Caco-2 (cell line): ENCODE measurements at regions of chr10 and their contacts with region 1.

Region 1: DNA sequence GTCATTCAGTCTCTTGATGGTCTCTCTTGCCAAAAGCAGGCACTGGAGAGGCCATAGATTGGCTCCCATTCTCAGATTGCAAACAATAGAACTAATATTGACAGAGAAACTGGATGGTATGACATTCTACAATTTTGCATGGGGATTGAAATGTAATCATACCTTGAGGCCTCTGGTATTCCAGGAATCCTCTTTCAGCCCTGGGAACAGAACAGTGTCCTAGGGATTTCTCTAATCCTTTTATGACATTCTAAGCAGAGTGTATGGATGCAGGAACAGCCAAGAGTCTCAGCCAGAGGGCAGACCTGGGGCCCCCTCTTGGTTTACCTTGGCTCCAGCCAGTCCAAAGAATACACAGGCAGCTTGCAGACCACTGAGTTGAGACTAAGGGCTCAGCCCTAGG is 206.4 kb downstream of the KCNMA1 start:
- DNase-seq: peak; percentile 90 to 94
- H3K4me3 ChIP-seq: no peak overlapping the region
- H3K4me3 Mint-ChIP-seq: peak overlapping the region; percentile 47
- H3K27ac Mint-ChIP-seq: peak overlapping the region; percentile 92
- H3K4me1 ChIP-seq: peaks cover 62% of the 10 kb centered on the region
- H3K4me1 Mint-ChIP-seq: peaks cover 66% of the 10 kb centered on the region
- H3K27me3 ChIP-seq: no peaks in the 10 kb centered on the region
- H3K27me3 Mint-ChIP-seq: no peaks in the 10 kb centered on the region
- CTCF ChIP-seq: peak in 1 of 2 experiments; percentile 75

Region 2: GRCh38 chr10:77391605-77392235 is 39.5 kb before region 1 on chr10:
- CTCF ChIA-PET with region 1: interaction called, 4 read pairs
- POLR2A ChIA-PET with region 1: no interaction called
- intact Hi-C with region 1: loop called (anchors 1 kb)
- DNase-seq: peak; percentile 79 to 81
- H3K4me3 ChIP-seq: no peak overlapping the region
- H3K4me3 Mint-ChIP-seq: no peak overlapping the region
- H3K27ac Mint-ChIP-seq: no peak overlapping the region
- H3K4me1 ChIP-seq: peaks cover 50% of the 10 kb centered on the region
- H3K4me1 Mint-ChIP-seq: peaks cover 40% of the 10 kb centered on the region
- H3K27me3 ChIP-seq: no peaks in the 10 kb centered on the region
- H3K27me3 Mint-ChIP-seq: no peaks in the 10 kb centered on the region
- CTCF ChIP-seq: peak; percentile 42 to 65

Region 3: DNA sequence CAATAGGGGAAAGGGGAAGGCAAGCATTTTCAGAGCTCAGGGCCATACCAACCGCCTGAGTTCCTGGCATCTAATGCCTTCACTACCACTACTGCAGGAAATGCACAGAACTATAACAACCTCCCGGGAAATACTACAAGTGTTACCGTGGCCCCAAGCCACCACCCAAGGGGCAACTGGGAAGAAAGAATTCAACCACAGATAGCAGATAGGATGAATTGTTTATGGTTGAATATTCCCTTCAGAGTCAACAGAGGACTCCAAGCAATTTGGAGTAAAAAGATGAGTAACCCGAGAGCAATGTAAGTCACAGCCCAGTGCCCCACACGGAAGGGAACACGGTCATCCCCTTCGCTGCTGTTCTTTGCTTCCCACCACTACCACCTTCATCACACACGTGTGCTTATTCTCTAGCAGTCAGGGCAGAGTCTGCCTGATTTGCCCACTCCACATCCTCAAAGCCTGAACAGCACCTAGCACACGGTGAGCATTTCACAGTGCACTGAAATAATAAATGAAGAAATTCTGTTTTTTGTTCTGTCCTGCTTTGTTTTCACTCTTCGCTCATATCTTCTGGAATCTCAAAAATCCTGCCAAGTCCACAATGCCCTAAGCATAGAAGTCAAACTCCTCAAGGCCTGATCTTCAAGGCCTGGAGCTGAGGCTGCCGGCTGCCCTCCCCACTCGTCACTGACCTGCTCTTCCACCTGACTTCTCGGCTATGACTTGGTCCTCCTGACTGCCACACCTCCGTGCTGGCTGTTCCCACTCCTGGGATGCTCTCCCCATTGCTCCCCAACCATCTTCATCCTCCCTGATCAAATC is 14.7 kb before region 1 on chr10:
- CTCF ChIA-PET with region 1: interaction called, 3 read pairs
- POLR2A ChIA-PET with region 1: no interaction called
- intact Hi-C with region 1: loop called (anchors 2 kb)
- DNase-seq: peak; percentile 25 to 46
- H3K4me3 ChIP-seq: no peak overlapping the region
- H3K4me3 Mint-ChIP-seq: peak overlapping the region; percentile 23
- H3K27ac Mint-ChIP-seq: peak overlapping the region; percentile 68
- H3K4me1 ChIP-seq: peaks cover 54% of the 10 kb centered on the region
- H3K4me1 Mint-ChIP-seq: peaks cover 36% of the 10 kb centered on the region
- H3K27me3 ChIP-seq: no peaks in the 10 kb centered on the region
- H3K27me3 Mint-ChIP-seq: no peaks in the 10 kb centered on the region
- CTCF ChIP-seq: no peak

Region 4: DNA sequence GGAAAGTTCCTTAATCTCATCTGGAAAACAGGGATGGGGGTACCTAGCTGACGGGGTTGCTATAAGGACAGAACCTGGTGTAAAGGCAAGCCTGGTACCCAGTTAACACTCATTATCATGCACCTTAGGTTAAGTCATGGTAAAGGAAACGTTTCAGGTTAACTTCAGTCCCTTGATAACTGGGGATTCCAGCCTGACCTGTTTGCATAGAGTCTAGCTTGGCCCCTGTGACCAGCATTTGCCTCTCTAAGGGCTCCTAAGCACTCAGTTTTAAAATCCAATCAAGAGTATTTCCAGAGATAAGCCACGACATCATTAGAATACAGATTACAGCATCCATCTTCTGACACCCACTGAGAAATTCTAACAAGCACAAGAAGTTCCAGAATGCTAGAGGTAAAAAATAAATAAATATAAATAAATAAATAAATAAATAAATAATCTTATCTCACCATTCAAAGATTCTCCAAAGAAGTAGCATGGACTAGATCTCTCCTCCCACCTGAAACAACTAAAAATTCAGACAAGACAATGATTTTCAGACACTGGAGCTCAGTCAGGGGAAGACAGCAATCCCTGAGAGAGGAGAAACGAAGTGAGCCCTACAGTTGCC is 21.8 kb after region 1 on chr10:
- CTCF ChIA-PET with region 1: interaction called, 3 read pairs
- POLR2A ChIA-PET with region 1: no interaction called
- intact Hi-C with region 1: loop called (anchors 1 kb)
- DNase-seq: peak; percentile 51 to 58
- H3K4me3 ChIP-seq: no peak overlapping the region
- H3K4me3 Mint-ChIP-seq: no peak overlapping the region
- H3K27ac Mint-ChIP-seq: peak overlapping the region; percentile 59
- H3K4me1 ChIP-seq: peaks cover 37% of the 10 kb centered on the region
- H3K4me1 Mint-ChIP-seq: peaks cover 49% of the 10 kb centered on the region
- H3K27me3 ChIP-seq: no peaks in the 10 kb centered on the region
- H3K27me3 Mint-ChIP-seq: no peaks in the 10 kb centered on the region
- CTCF ChIP-seq: no peak

Region 5: DNA sequence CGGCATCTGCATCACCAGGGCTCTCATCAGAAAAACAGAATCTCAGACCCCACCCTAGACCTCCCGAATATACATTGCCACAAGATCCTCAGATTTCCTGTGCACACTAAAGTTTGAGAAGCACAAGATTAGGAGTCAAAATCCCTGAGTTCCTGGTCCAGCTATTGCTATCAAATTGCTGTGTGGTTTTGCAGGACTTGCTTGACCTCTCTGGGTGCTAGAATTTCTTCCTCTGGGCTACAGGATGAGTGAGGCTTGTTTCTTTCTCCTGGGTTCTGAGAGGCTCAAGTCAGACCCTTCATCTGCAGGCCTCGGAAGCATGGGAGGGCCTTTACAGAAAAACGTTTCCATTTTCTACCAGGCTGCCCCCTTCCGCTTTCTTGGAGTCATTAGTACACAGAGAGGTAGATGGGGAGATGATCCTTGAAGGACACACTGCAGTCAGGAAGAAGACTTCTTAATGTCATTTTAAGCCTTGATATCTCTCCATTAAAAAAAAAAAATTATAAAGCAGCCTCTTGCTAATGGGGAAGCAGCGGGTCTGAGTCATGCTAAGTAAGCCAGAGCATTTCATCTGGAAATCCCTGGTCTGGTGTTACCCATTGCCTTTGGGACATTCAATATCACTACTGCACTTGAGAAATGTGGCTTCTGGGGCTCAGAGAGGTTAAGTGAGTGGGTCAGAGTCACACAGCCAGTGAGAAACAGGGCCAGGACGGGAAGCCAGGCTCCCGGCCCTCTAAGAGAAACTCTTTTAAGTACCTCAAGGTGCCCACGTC is 32.9 kb after region 1 on chr10:
- CTCF ChIA-PET with region 1: no interaction called
- POLR2A ChIA-PET with region 1: no interaction called
- intact Hi-C with region 1: no loop called
- DNase-seq: no peak
- H3K4me3 ChIP-seq: no peak overlapping the region
- H3K4me3 Mint-ChIP-seq: no peak overlapping the region
- H3K27ac Mint-ChIP-seq: no peak overlapping the region
- H3K4me1 ChIP-seq: peaks cover 6% of the 10 kb centered on the region
- H3K4me1 Mint-ChIP-seq: peaks cover 25% of the 10 kb centered on the region
- H3K27me3 ChIP-seq: no peaks in the 10 kb centered on the region
- H3K27me3 Mint-ChIP-seq: no peaks in the 10 kb centered on the region
- CTCF ChIP-seq: no peak

Region 6: GRCh38 chr10:77478247-77478961 is 47.2 kb after region 1 on chr10:
- CTCF ChIA-PET with region 1: no interaction called
- POLR2A ChIA-PET with region 1: no interaction called
- intact Hi-C with region 1: no loop called
- DNase-seq: no peak
- H3K4me3 ChIP-seq: no peak overlapping the region
- H3K4me3 Mint-ChIP-seq: no peak overlapping the region
- H3K27ac Mint-ChIP-seq: no peak overlapping the region
- H3K4me1 ChIP-seq: peaks cover 8% of the 10 kb centered on the region; the same call in 1 of the 2 replicates
- H3K4me1 Mint-ChIP-seq: peaks cover 14% of the 10 kb centered on the region
- H3K27me3 ChIP-seq: no peaks in the 10 kb centered on the region
- H3K27me3 Mint-ChIP-seq: no peaks in the 10 kb centered on the region
- CTCF ChIP-seq: no peak

Region 7: DNA sequence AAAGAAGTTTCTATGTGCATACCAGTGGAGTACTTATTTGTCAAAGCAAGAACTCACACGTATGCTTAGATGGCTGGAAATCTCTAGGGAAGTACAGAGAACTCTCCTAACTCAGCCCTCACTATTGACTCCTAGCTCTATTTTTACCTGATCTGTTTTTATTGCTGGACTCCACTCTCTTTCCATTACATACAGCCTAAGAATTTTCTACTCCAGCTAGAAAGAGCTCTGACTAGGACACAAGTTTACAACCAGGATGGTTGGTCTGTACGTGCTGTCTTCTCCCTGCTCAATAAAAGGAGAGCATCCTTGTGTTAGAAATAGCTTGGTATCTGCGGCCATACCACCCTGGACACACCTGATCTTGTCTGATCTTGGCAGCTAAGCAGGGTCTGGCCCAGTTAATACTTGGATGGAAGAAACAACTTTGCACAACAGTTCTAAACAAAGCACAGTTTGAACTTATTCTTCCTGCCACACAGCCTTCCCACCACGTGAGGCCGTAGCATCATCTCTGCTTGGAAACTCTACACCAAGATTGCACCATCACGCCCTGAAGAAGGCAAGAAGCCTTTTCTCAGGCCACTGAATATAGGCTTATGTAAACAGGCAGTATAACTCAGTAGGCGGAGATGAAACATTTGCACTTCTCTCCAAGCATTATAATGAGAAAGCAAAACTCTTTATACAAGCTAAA is 155.7 kb after region 1 on chr10:
- CTCF ChIA-PET with region 1: no interaction called
- POLR2A ChIA-PET with region 1: no interaction called
- intact Hi-C with region 1: loop called (anchors 1 kb)
- DNase-seq: peak in 1 of 2 experiments; percentile 58
- H3K4me3 ChIP-seq: no peak overlapping the region
- H3K4me3 Mint-ChIP-seq: no peak overlapping the region
- H3K27ac Mint-ChIP-seq: peak overlapping the region; percentile 73
- H3K4me1 ChIP-seq: peaks cover 22% of the 10 kb centered on the region; the same call in 1 of the 2 replicates
- H3K4me1 Mint-ChIP-seq: peaks cover 10% of the 10 kb centered on the region
- H3K27me3 ChIP-seq: no peaks in the 10 kb centered on the region
- H3K27me3 Mint-ChIP-seq: no peaks in the 10 kb centered on the region
- CTCF ChIP-seq: peak in 1 of 2 experiments; percentile 17

Region 8: GRCh38 chr10:77628906-77629730 is 197.9 kb after region 1 on chr10:
- CTCF ChIA-PET with region 1: no interaction called
- POLR2A ChIA-PET with region 1: no interaction called
- intact Hi-C with region 1: no loop called
- DNase-seq: no peak
- H3K4me3 ChIP-seq: no peak overlapping the region
- H3K4me3 Mint-ChIP-seq: no peak overlapping the region
- H3K27ac Mint-ChIP-seq: no peak overlapping the region
- H3K4me1 ChIP-seq: no peaks in the 10 kb centered on the region
- H3K4me1 Mint-ChIP-seq: peaks cover 10% of the 10 kb centered on the region
- H3K27me3 ChIP-seq: no peaks in the 10 kb centered on the region
- H3K27me3 Mint-ChIP-seq: no peaks in the 10 kb centered on the region
- CTCF ChIP-seq: no peak

Region 9: DNA sequence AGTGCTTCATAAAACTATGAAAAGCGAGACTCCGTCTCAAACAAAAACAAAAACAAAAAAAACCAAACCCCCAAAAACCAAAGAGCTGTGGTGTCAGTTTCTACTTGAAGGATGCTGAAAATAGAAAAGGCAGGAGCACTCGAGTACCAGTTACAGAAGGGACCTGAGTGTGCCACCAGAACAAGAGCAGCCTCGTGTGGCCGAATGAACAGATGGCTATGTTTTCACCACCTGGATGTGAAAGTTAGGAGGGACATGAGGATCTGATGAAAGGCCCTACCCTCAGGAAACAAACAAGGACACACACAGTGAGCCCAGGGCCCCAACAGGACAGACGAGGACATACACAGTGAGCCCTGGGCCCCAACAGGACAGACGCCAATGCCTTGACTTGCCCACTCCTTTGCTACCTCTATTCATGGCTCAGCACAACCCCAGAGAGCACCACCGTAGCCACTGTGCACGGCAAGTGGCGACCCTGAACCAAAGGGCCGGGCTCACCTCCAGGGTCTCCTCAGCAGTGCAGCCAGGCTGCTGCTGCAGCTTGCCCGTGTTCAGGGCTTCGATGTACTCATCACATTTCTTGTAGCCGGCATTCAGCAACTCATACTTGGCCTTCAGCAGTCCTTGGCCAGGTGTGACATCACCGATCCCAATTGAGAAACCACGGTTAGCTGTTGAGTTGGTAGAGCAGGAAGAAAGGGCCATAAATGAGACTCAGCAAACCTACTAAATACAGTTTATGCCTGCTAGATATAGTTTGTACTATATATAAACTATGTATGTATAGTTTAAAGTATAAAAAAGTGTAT is 573.2 kb after region 1 on chr10:
- CTCF ChIA-PET with region 1: no interaction called
- POLR2A ChIA-PET with region 1: no interaction called
- intact Hi-C with region 1: no loop called
- DNase-seq: peak in 1 of 2 experiments; percentile 7
- H3K4me3 ChIP-seq: no peak overlapping the region
- H3K4me3 Mint-ChIP-seq: no peak overlapping the region
- H3K27ac Mint-ChIP-seq: no peak overlapping the region
- H3K4me1 ChIP-seq: no peaks in the 10 kb centered on the region
- H3K4me1 Mint-ChIP-seq: no peaks in the 10 kb centered on the region
- H3K27me3 ChIP-seq: no peaks in the 10 kb centered on the region
- H3K27me3 Mint-ChIP-seq: no peaks in the 10 kb centered on the region
- CTCF ChIP-seq: peak in 1 of 2 experiments; percentile 19